Sciatic nerve (tissue), 2 donors: ENCODE measurements at regions of chr15 and their contacts with region 1.

Region 1: DNA sequence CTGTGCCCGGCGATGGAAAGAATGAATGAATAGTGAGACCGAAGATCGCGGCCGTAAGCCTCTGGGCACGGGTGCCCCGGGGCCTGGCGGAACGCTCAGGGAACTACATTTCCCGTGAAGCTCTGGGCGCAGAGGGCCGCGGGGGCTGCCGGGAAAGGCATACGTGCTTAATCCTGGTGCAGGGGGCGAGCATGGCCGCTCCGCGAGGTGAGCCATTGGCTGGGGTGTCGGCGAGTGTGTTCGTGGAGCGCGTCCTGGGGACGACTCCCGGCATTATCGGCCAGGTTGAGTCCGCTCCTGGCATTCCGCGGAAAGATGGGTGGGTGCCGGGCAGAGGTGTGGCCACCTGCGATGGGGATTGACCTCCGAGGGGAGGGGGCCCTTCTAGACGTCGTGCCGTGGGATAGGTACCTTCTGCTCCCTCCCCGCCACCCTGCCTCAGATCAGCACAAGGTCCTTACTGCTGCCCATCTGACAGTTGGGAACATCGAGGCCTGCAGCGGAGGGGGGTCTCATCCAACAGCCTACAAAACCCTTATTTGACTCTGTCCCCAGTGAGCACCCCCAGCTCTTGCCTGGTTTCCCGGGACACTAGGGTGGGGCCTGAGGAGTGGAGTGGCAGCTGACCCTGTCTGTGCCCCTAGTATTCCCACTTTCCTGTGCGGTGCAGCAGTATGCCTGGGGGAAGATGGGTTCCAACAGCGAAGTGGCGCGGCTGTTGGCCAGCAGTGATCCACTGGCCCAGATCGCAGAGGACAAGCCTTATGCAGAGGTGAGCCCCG is at the start of gene MPI:
- DNase-seq: peak; percentile 90
- ATAC-seq: peak; percentile 98
- total RNA-seq, gene MPI: 38.2 TPM

Region 2: DNA sequence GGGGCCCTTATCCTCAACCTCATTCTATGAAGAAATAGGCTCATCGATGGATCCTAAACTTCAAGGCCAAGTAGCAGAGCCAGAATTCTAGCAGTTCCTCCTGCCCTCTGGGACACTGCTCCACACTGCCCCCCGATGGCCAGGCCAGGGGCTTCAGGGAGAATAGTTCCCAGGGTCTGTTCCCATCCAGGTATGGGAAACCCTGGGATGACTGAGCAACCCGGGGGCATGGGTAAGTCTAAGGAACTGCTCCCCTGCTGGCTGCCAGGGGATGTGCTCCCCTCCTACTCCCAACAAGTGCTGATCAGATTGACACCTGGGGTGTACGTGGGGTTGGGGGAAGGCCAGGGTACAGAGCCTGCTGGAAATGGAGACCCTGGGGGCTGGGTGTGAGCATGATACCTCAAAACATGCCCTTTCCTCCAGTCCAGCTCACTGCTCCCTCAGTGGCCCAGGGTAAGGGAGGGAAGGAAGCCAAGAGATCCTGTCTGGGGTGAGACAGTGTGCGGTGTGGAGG is 54.7 kb before region 1 on chr15:
- intact Hi-C with region 1: loop called (anchors 10 kb)
- DNase-seq: no peak
- ATAC-seq: peak; percentile 53